Calu3 (cell line): ENCODE measurements at regions of chr5 and their contacts with region 1.

Region 1: GRCh38 chr5:36111238-36111637 is 40.4 kb downstream of the LMBRD2 start:
- DNase-seq: no peak
- H3K4me3 Mint-ChIP-seq: no peak overlapping the region
- H3K27ac Mint-ChIP-seq: no peak overlapping the region
- H3K4me1 Mint-ChIP-seq: peaks cover 19% of the 10 kb centered on the region
- H3K27me3 Mint-ChIP-seq: no peaks in the 10 kb centered on the region
- CTCF ChIP-seq: no peak

Region 2: DNA sequence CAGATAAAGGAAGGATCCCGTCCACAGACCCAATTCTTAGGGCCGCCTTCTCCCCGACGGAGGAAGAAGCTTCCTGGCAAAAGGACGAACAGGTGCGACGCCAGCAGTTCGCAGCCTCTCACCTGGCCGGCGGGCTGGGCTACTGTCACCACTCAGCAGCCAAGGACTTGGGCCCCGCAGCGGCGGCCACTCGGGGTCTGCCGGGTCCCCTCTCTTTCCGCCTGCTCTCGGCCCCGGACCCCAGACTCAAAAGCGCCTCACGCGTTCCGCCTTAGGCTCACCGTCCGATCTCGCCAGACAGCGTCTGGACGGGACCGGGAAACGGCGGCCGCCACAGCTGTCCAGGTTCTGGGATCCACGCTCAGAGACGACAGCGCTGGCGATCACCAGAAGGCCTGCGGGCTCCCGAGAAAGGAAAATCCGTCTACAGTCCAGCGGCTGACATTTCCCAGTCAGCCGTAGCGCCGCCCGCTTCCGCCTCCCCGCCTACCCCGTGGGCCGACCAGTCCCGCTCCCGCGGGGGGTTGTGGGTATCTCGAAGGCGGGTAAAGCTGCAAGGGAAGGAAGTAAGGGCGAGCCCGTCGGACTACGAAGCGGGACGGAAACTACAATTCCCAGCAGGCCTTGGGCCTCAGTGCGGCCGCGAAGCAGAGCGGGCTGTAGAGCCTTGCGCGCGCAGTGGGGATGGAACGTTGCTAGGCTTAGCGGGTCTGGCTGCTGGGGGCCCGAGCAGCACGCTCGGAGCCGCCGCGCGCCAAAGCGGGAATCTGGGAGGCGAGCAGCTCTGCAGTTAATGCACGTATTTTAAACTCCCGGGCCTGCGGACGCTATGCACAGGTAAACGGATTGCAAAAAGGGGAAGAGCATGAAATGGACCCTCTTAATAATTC is 40.4 kb after region 1 on chr5 and contains the starts of genes LMBRD2 and SKP2:
- CTCF ChIA-PET with region 1: no interaction called
- intact Hi-C with region 1: loop called (anchors 5 kb)
- DNase-seq: peak; percentile 97
- H3K4me3 Mint-ChIP-seq: peak within 1 kb of the TSS; percentile 98
- H3K27ac Mint-ChIP-seq: peak within 1 kb of the TSS; percentile 73
- H3K4me1 Mint-ChIP-seq: peaks cover 24% of the 10 kb centered on the region
- H3K27me3 Mint-ChIP-seq: no peaks in the 10 kb centered on the region
- CTCF ChIP-seq: no peak
- total RNA-seq, gene LMBRD2: 12.1 and 13.8 TPM in 2 replicates
- total RNA-seq, gene SKP2: 23.7 and 26.1 TPM in 2 replicates